CD14-positive monocyte (primary cell): ENCODE measurements at regions of chr9 and their contacts with region 1.

Region 1: DNA sequence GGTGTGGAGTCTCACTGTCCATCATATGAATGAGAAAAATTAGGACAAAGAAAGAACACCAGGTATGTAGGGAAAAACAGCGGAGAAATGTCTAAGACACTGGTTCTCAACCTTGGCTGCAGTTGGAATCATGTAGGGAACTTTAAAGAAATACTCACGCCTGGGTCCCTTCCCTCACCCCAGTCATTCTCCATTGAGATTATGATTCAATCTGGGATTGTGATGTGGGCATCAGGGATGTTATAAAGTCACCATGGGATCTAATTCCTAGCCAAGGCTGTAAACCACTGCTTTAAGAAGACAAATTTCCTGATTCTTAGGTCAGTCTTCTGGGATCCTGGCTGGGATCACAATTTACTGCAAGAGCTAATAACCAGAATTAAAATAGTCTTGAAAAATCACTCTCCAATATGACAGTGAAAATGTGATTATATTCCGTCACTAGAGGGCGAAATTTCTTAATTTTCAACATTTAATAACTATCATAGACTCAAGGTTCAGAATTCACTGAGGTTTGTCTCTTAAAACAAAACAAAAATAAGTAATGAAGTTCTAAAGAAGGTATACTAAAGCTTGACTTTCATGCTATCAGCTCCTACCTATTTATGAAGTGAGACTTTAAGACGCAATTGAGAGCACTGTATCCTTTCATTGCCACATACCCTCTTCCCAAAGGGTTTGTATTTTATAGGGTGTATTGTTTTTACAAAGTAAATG is 60.5 kb downstream of the GLDC start:
- DNase-seq: no peak
- H3K4me3 ChIP-seq: no peak overlapping the region
- H3K4me3 Mint-ChIP-seq: no peak overlapping the region
- H3K27ac ChIP-seq: no peak overlapping the region
- H3K27ac Mint-ChIP-seq: no peak overlapping the region
- H3K4me1 ChIP-seq: peaks cover 9 to 28% of the 10 kb centered on the region in 2 donors
- H3K4me1 Mint-ChIP-seq: peaks cover 21% of the 10 kb centered on the region
- H3K27me3 ChIP-seq: no peaks in the 10 kb centered on the region
- H3K27me3 Mint-ChIP-seq: peaks cover 0 to 2% (median 0%) of the 10 kb centered on the region in 3 donors
- CTCF ChIP-seq: peak; percentile 75

Region 2: GRCh38 chr9:6467006-6467625 is 117.9 kb before region 1 on chr9:
- intact Hi-C with region 1: no loop called
- DNase-seq: no peak
- H3K4me3 ChIP-seq: no peak overlapping the region
- H3K4me3 Mint-ChIP-seq: no peak overlapping the region
- H3K27ac ChIP-seq: no peak overlapping the region
- H3K27ac Mint-ChIP-seq: peak overlapping the region in 3 of 7 donors; percentile 42 to 75 (median 50)
- H3K4me1 ChIP-seq: no peaks in the 10 kb centered on the region
- H3K4me1 Mint-ChIP-seq: no peaks in the 10 kb centered on the region
- H3K27me3 ChIP-seq: no peaks in the 10 kb centered on the region
- H3K27me3 Mint-ChIP-seq: peaks cover 0 to 1% (median 0%) of the 10 kb centered on the region in 3 donors
- CTCF ChIP-seq: no peak

Region 3: DNA sequence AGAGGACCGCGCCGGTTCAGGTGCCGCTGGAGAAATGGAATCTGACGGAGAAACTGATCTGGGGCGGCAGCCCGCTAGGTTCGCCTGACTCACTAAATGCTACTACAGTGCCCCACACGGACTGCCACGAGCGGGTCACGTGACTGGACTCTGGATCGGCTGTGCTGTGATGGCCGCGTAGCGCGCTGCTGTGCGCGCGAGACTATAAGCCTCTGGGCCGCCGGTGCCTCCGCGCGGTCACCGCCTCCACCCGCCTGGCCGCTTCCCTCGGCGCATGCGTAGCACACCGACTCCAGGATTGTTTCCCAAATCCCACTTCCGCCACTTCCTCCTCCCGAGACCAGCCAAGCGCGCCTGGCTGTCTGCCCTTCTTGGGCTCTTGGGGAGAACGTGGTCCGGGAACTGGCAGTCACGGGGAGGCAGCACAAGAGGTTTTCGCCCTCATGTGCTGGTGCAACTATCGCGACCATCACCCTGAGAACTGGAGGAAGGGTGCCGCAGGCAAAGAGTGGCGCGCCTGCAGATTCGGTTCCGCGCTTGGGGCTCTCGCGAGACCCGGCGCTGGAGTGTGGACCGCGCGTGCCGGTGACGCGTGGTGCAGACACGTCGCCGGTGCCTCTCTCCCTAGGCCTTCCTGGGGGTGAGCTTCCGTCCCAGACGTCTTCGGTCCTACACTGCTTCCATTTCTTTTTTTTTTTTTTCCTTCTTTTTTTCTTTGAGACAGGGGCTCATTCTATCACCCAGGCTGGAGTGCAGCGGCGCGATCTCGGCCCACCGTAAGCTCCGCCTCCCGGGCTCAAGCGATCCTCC is 96.3 kb after region 1 on chr9:
- intact Hi-C with region 1: loop called in 1 of 2 experiments (anchors 10 kb)
- DNase-seq: peak; percentile 97 to 98 (median 98)
- H3K4me3 ChIP-seq: peak overlapping the region; percentile 48 to 72 (median 68)
- H3K4me3 Mint-ChIP-seq: peak overlapping the region; percentile 83 to 95
- H3K27ac ChIP-seq: peak overlapping the region; percentile 96 to 98
- H3K27ac Mint-ChIP-seq: peak overlapping the region; percentile 98 to 99 (median 99)
- H3K4me1 ChIP-seq: peaks cover 43 to 47% of the 10 kb centered on the region in 2 donors
- H3K4me1 Mint-ChIP-seq: peaks cover 28% of the 10 kb centered on the region
- H3K27me3 ChIP-seq: no peaks in the 10 kb centered on the region
- H3K27me3 Mint-ChIP-seq: peaks cover 0 to 4% (median 0%) of the 10 kb centered on the region in 3 donors
- CTCF ChIP-seq: no peak